GM18951 (cell line): ENCODE measurements at regions of chr22 and their contacts with region 1.

Region 1: DNA sequence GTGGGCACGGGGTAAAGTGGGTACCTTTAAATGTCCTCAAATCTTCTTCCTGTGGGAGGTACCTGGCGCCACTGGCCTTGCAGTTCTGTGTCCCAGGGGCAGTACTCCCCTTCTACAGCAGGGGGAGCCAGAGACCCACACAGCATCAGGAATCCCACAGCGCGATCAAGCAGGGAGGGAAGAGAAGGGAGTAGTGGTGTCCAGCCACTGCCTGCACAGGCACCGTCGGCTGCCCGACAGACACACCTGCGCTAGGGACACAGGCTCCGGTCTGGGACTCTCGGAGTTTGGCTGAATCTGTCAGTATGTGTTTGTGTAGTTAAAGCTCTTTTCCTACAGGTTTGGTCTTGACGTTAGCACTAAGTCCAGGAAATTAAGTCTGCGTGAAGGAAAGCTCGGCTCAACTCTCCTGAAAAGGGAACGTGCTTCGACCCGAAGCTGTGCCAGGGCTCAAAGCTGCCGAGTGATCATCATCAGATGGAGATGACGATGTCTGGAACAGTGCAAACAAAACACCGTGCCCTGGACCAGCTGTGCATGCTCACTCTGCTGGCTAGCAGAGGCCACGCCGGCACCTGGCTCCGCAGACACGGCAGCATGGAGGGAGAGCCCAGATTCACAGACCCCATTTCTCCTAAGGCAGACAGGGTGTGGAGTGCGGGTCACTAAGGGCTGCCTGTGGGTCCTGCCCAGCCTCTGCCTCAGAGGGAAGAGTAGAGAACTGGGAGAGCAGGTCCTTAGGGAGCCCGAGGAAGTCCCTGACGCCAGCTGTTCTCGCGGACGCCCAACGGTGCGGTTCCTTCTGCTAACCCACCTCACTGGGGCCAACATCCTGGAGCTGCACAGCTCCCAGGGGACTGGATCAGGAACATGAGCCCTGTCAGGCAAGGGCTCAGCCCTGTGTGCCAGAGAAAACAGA is 56.0 kb upstream of the BID start:
- POLR2A ChIP-seq: no peak

Region 2: DNA sequence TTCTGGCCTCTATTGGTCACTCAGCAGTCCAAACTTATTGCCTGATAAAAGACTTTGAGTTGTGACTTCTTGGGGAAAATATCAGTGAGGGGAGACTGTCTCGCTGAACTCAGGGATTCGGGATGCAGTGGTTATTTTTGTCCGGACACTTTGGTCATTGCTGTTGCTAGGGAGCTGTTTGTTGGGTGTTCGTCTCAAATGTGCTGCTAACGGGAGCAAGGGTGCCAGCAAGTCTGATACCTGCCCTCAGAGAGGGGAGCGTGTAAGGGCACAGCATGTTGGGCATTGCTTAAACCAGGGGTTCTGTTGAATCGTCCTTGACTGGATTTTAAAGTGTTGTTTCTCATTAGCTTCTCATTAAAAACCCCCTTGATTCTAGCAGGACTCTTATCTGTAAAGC is 316.2 kb before region 1 on chr22:
- in situ Hi-C with region 1: no loop called
- POLR2A ChIP-seq: no peak

Region 3: GRCh38 chr22:18068381-18068988 is 238.2 kb after region 1 on chr22:
- in situ Hi-C with region 1: loop called (anchors 5 kb)
- POLR2A ChIP-seq: no peak